ENCODE measurements at regions of chr6 and their contacts with region 1.

Region 1: GRCh38 chr6:75748743-75749501 is at the start of gene MYO6:
- DNase-seq: peak; percentile 60
- H3K4me3 Mint-ChIP-seq: peak within 1 kb of the TSS; percentile 88
- H3K27ac Mint-ChIP-seq: no peak within 1 kb of the TSS
- H3K4me1 Mint-ChIP-seq: peaks cover 11% of the 10 kb centered on the region
- H3K27me3 Mint-ChIP-seq: peaks cover 18% of the 10 kb centered on the region
- total RNA-seq, gene MYO6: 6.1 to 6.4 TPM

Region 2: DNA sequence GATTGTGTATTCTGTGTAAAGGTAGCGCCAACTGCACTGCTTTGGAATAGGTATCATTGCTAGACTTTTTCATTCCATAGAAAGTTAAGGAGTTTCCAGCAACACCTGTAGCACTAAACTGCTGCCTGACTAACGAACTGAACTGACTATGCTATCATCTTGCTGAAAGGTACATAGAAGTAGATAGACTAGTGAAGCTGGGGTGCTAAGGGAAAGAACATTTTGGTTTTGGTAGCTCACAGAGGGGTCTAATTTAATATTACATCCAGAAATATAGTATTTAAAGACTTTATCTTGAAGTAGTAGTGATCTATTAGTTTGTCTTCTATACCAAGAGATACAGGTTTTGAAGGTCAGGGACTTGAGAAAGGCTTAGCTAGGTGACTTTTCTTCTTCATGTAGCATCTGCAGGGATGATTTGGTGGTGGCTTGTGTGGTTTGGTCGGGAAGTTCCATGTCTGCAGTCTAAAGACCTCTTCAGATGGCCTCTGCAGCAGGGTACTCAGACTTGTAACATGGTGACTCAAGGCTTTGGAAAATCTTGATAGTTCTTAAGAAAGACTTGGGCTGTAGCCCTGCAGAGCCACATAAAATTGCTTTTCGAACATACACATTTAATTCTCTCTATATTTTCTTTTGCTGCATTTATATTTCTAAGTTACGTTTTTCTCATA is 137.1 kb before region 1 on chr6:
- CTCF ChIA-PET with region 1: no interaction called
- POLR2A ChIA-PET with region 1: no interaction called
- intact Hi-C with region 1: loop called (anchors 5 kb)
- DNase-seq: peak; percentile 79
- H3K4me3 Mint-ChIP-seq: peak overlapping the region; percentile 10
- H3K27ac Mint-ChIP-seq: peak overlapping the region; percentile 63
- H3K4me1 Mint-ChIP-seq: peaks cover 85% of the 10 kb centered on the region
- H3K27me3 Mint-ChIP-seq: no peaks in the 10 kb centered on the region